CD4-positive, alpha-beta memory T cell (primary cell): ENCODE measurements at regions of chr17 and their contacts with region 1.

Region 1: DNA sequence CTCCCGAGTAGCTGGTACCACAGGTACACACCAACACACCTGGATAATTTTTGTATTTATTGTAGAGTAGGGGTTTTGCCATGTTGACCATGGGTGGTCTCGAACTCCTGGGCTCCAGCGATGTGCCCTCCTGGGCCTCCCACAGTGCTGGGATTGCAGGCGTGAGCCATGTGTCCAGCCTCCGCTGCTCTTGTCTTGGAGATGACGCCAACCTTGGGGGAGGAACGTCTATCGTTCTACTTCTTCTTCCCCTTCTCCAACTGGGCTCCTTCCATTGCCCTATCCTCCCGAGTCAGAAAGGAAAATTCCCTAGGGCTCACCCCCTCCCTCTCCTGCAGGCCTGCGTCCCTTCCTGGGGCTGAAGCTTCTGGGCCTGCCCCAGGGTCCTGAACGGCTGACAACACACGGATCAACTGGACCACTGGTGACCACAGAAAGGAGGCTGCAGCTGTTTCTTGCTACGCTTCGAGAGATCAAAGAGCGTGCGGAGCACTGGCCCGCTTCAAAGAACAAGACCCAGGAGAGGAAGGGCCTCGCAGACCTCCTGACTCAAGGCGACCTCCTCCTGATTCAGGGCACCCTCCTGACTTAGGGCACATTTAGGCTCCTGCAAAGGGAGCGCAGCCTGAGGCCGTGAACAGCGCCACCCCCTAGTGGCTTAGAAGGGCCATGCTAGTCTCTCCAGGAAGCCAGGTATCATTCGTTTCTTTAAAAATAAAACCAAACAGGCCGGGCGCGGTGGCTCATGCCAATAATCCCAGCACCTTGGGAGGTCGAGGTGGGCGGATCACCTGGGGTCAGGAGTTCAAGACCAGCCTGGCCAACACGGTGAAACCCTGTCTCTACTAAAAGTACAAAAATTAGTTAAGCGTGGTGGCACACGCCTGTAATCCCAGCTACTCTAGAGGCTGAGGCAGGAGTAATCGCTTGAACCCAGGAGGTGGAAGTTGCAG is 48.5 kb upstream of the HELZ start:
- DNase-seq: peak; percentile 61 to 70 (median 69)
- H3K4me3 ChIP-seq: no peak overlapping the region
- H3K4me3 Mint-ChIP-seq: peak overlapping the region in 6 of 8 donors; percentile 32 to 69 (median 52)
- H3K27ac ChIP-seq: no peak overlapping the region
- H3K27ac Mint-ChIP-seq: peak overlapping the region in 5 of 7 donors; percentile 23 to 47 (median 36)
- H3K4me1 ChIP-seq: no peaks in the 10 kb centered on the region
- H3K4me1 Mint-ChIP-seq: peaks cover 0 to 7% (median 5%) of the 10 kb centered on the region in 4 donors
- H3K27me3 ChIP-seq: no peaks in the 10 kb centered on the region
- H3K27me3 Mint-ChIP-seq: no peaks in the 10 kb centered on the region

Region 2: GRCh38 chr17:66715745-66716156 is 577.8 kb before region 1 on chr17:
- CTCF ChIA-PET with region 1: no interaction called
- POLR2A ChIA-PET with region 1: no interaction called
- intact Hi-C with region 1: loop called (anchors 5 kb)
- DNase-seq: peak in 4 of 5 donors; percentile 30 to 49 (median 36)
- H3K4me3 ChIP-seq: no peak overlapping the region
- H3K4me3 Mint-ChIP-seq: no peak overlapping the region
- H3K27ac ChIP-seq: no peak overlapping the region
- H3K27ac Mint-ChIP-seq: peak overlapping the region in 2 of 7 donors; percentile 31 to 48
- H3K4me1 ChIP-seq: peaks cover 12% of the 10 kb centered on the region
- H3K4me1 Mint-ChIP-seq: peaks cover 13 to 38% (median 27%) of the 10 kb centered on the region in 4 donors
- H3K27me3 ChIP-seq: no peaks in the 10 kb centered on the region
- H3K27me3 Mint-ChIP-seq: no peaks in the 10 kb centered on the region

Region 3: GRCh38 chr17:67116045-67116719 is 177.3 kb before region 1 on chr17:
- CTCF ChIA-PET with region 1: no interaction called
- POLR2A ChIA-PET with region 1: no interaction called
- intact Hi-C with region 1: loop called (anchors 5 kb)
- DNase-seq: no peak
- H3K4me3 ChIP-seq: no peak overlapping the region
- H3K4me3 Mint-ChIP-seq: peak overlapping the region in 1 of 8 donors; percentile 7
- H3K27ac ChIP-seq: no peak overlapping the region
- H3K27ac Mint-ChIP-seq: peak overlapping the region in 3 of 7 donors; percentile 19 to 72 (median 22)
- H3K4me1 ChIP-seq: no peaks in the 10 kb centered on the region
- H3K4me1 Mint-ChIP-seq: peaks cover 5 to 22% (median 9%) of the 10 kb centered on the region in 4 donors
- H3K27me3 ChIP-seq: no peaks in the 10 kb centered on the region
- H3K27me3 Mint-ChIP-seq: no peaks in the 10 kb centered on the region

Region 4: DNA sequence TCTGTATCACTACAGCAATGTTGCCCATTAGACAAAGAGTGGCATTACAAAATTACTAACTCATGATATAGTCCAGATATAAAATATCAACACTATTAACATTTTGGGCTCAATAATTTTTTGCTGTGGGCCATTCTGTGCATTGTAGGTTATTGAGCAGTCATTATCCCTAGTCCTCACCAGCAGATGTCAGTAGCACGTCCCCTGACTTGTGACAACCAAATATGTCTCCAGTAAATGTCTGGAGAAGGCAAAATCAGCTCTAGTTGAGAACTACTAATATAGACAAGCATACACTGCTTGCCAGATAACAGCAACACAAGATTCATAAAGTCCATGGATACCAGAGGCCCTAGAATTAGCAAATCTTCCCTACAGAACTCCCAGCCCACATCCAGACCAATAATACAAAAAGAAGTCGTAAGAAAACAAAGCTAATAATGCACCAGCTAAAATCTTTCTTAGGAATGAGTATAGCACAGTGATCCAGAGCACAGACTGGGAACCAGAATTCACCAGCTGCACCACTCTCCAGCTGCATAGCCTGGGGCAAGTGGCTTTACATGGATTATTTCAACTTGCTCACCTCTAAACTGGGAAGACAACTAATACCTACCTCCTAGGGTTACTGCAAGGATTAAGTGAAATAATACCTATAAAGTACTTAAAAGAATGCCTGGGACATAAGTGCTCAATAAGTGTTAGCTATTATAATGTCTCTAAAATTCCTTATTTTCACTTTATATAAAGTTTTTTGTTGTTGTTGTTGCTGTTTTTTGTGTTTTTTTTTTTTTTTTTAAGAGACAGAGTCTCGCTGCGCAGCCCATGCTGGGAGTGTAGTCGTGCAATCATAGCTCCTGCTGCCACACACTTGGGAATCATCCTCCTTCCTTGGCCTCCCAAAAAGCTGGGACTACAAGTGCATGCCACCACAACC is 72.2 kb before region 1 on chr17:
- CTCF ChIA-PET with region 1: interaction called, 93 read pairs
- POLR2A ChIA-PET with region 1: interaction called, 4 read pairs
- intact Hi-C with region 1: loop called (anchors 1 kb)
- DNase-seq: peak; percentile 33 to 58 (median 50)
- H3K4me3 ChIP-seq: no peak overlapping the region
- H3K4me3 Mint-ChIP-seq: peak overlapping the region in 1 of 8 donors; percentile 43
- H3K27ac ChIP-seq: no peak overlapping the region
- H3K27ac Mint-ChIP-seq: peak overlapping the region in 4 of 7 donors; percentile 3 to 77 (median 50)
- H3K4me1 ChIP-seq: peaks cover 16% of the 10 kb centered on the region
- H3K4me1 Mint-ChIP-seq: peaks cover 37 to 60% (median 49%) of the 10 kb centered on the region in 4 donors
- H3K27me3 ChIP-seq: no peaks in the 10 kb centered on the region
- H3K27me3 Mint-ChIP-seq: no peaks in the 10 kb centered on the region